Colonic mucosa (tissue), 4 donors: ENCODE measurements at regions of chr16 and their contacts with region 1.

Region 1: DNA sequence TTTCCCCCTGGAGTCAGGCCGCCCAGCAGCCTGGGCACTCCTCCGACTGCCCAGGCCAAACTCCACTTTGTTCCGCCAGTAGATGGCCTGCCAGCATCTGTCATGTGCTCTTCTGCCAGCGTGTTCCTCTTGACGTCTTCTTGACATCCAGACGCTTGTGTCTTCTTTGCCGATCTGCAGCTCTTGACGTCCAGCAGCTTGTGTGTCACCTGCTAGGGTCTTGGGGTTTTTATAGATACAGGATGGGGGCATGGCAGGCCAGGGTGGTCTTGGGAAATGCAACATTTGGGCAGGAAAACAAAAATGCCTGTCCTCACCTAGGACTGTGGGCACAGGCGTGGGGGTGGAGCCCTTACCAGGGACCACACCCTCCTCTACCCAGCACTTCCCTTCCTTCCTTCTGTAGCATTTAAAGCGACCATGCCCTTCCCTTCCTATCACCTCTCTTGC is 88.7 kb downstream of the BMERB1 start:
- DNase-seq: peak; percentile 59
- H3K4me3 ChIP-seq: no peak overlapping the region
- H3K27ac ChIP-seq: no peak overlapping the region
- H3K4me1 ChIP-seq: no peaks in the 10 kb centered on the region
- H3K27me3 ChIP-seq: no peaks in the 10 kb centered on the region
- CTCF ChIP-seq: peak; percentile 26

Region 2: DNA sequence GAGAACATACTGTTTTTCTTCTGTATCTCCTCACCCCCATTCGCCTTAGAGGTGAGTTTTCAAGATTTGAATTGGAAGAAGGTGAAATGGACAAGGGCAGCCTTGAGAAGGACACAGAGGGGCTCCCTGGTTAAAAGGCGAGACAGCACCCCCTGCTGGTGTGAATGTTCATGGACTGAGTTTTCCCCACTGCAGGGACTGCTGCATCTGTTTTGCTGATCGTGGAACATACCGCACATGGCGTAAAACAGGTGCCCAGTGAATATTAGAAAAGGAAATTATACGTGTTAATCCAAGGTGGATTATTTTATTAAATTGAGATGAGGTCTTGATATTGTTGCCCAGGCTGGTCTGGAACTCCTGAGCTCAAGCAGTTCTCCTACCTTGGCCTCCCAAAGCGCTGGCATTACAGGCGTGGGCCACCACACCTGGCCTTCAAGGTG is 181.4 kb after region 1 on chr16:
- intact Hi-C with region 1: loop called (anchors 5 kb)
- DNase-seq: peak; percentile 81
- H3K4me3 ChIP-seq: no peak overlapping the region
- H3K27ac ChIP-seq: no peak overlapping the region
- H3K4me1 ChIP-seq: no peaks in the 10 kb centered on the region
- H3K27me3 ChIP-seq: no peaks in the 10 kb centered on the region
- CTCF ChIP-seq: peak; percentile 72